Motor neuron (in vitro differentiated cells): ENCODE measurements at regions of chr10 and their contacts with region 1.

Region 1: DNA sequence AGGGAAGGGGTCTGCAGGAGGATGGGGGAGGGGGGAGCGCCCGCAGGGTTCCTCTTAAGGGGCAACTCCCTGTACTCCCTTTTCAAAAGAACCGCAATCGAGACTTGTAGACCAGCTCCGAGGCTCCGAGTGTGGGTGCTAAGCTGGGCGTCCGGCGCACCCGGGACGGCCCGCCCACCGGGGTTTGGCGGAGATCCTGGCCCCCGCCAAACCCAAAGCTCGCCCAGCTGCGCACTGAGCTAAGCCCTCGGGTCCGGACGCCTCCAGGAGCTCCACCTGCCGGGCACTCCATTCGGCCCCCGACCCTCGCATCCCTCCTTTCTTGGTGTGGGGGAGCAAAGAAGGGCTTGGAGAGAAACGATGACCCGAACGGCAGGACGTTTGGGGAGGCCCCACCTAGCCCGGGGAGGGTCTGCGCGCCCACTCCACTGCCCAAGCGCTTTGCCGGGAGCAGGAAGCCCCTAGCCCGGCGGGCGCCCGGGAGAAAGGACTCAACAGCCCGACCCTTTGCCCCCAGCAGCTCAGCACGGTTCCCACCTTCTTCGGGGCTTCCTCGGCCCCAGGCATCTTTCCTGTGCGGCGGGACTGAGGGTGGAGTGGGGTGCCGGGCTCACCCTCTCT is 651 bp downstream of the AFAP1L2 start:
- ATAC-seq: peak; percentile 22 to 67 (median 55)
- H3K4me3 ChIP-seq: peak overlapping the region; percentile 23 to 34 (median 27)
- H3K27ac ChIP-seq: no peak overlapping the region
- H3K4me1 ChIP-seq: peaks cover 0 to 11% of the 10 kb centered on the region in 2 donors

Region 2: DNA sequence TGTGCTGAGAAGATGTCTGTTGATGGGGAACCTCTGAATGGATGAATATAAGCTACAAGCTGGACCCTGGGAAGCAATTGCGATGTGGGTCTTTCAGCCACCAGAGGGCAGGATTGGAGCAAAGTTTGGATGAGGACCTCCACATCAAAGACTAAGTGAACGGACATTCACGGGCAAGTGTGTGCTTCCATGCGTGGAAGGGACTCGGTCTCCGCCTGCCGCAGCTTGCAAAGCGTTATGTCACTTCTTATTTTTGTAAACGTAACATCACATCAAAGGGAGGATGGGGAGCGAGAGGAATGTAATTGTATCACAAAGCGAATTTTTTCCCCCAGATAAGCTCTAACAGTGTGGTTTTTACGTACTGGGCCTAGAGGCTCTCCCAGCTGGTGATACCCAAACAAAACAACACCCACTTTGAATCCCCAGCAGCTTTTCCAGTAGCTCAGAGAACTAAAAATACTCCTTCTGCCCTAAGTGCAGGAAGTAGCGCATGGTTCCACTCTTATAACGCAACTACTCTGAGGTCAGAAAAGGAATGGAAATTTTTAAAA is 99.6 kb before region 1 on chr10:
- in situ Hi-C with region 1: loop called in 2 of 9 experiments (anchors 25 kb)
- ATAC-seq: peak; percentile 44 to 76 (median 65)
- H3K4me3 ChIP-seq: peak overlapping the region; percentile 41 to 57 (median 45)
- H3K27ac ChIP-seq: peak overlapping the region; percentile 57 to 69
- H3K4me1 ChIP-seq: peaks cover 23 to 24% of the 10 kb centered on the region in 2 donors

Region 3: GRCh38 chr10:114346271-114347031 is 57.2 kb before region 1 on chr10:
- in situ Hi-C with region 1: no loop called
- ATAC-seq: peak in 3 of 8 experiments; percentile 18 to 58 (median 58)
- H3K4me3 ChIP-seq: no peak overlapping the region
- H3K27ac ChIP-seq: no peak overlapping the region
- H3K4me1 ChIP-seq: peaks cover 10 to 20% of the 10 kb centered on the region in 2 donors

Region 4: DNA sequence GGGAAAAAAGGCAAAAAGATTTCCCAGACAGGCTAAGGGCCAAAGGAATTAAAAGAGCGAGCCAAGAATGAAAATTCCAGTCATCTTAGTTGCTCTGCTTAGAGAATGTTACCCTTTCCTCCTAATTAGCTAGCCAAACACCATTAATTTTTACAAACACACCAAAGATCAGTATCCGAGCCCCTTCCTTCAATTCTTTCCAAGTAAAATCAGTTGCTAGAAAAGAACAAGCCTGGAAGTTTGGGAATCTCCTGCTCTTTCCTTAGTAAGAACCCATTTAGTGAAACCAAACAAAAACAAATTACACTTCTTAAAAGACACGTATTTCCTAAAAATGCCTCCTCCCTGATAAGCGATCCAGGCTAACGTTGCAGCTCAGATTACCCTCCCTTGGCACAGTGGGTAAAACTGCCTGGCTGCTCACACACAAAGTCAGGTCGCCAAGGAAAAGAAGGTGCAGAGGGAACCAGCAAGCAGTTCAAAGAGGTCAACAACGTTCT is 311.6 kb after region 1 on chr10:
- in situ Hi-C with region 1: no loop called
- ATAC-seq: no peak
- H3K4me3 ChIP-seq: no peak overlapping the region
- H3K27ac ChIP-seq: no peak overlapping the region
- H3K4me1 ChIP-seq: peaks cover 2 to 13% of the 10 kb centered on the region in 2 donors